CD4-positive, alpha-beta T cell (primary cell): ENCODE measurements at regions of chr15 and their contacts with region 1.

Region 1: GRCh38 chr15:100602064-100602822 is at the starts of genes ASB7 and LINS1:
- DNase-seq: peak; percentile 99 to 100 (median 100)
- ATAC-seq: peak; percentile 89
- H3K4me3 ChIP-seq: peak within 1 kb of the TSS; percentile 96
- H3K4me3 Mint-ChIP-seq: peak within 1 kb of the TSS; percentile 96
- H3K27ac ChIP-seq: peak within 1 kb of the TSS; percentile 84 to 94
- H3K27ac Mint-ChIP-seq: peak within 1 kb of the TSS; percentile 87
- H3K4me1 ChIP-seq: peaks cover 44% of the 10 kb centered on the region
- H3K4me1 Mint-ChIP-seq: peaks cover 62% of the 10 kb centered on the region
- H3K27me3 ChIP-seq: no peaks in the 10 kb centered on the region
- H3K27me3 Mint-ChIP-seq: no peaks in the 10 kb centered on the region
- CTCF ChIP-seq: no peak
- total RNA-seq, gene ASB7: 14.9 to 16.7 TPM
- total RNA-seq, gene LINS1: 38.9 to 39.6 TPM

Region 2: DNA sequence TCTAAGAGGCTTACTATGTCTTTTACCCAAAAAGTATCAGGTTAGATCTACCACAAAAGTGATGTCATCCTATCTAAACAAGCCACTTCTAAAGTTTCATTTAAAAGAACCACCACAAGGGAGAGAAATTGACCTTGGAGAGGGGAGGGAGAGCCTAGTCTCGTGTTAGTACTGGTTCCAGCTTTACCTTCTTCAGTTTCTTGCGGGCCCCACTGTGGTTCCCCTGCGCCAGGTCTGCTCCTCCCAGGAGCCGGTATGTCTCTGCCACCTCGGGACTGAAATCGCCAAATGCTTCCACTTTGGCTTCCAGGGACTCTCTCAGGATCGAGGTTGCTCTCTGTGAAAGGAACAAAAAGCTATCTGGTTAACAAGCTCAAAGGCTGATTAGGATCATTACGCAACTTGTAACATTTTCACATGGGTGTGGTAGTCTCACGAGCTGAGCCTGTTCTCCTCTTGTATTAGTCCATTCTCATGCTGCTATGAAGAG is 1446.2 kb before region 1 on chr15:
- CTCF ChIA-PET with region 1: no interaction called
- POLR2A ChIA-PET with region 1: no interaction called
- intact Hi-C with region 1: no loop called
- DNase-seq: no peak
- ATAC-seq: no peak
- H3K4me3 ChIP-seq: no peak overlapping the region
- H3K4me3 Mint-ChIP-seq: no peak overlapping the region
- H3K27ac ChIP-seq: no peak overlapping the region
- H3K27ac Mint-ChIP-seq: no peak overlapping the region
- H3K4me1 ChIP-seq: no peaks in the 10 kb centered on the region
- H3K4me1 Mint-ChIP-seq: no peaks in the 10 kb centered on the region
- H3K27me3 ChIP-seq: no peaks in the 10 kb centered on the region
- H3K27me3 Mint-ChIP-seq: no peaks in the 10 kb centered on the region
- CTCF ChIP-seq: no peak

Region 3: GRCh38 chr15:99733268-99734039 is 868.8 kb before region 1 on chr15 and contains the start of gene LYSMD4:
- CTCF ChIA-PET with region 1: no interaction called
- POLR2A ChIA-PET with region 1: interaction called, 3 read pairs
- intact Hi-C with region 1: loop called in 1 of 2 experiments (anchors 2 kb)
- DNase-seq: peak; percentile 97 to 99 (median 98)
- ATAC-seq: peak; percentile 98
- H3K4me3 ChIP-seq: peak within 1 kb of the TSS; percentile 80
- H3K4me3 Mint-ChIP-seq: peak within 1 kb of the TSS; percentile 94
- H3K27ac ChIP-seq: peak within 1 kb of the TSS; percentile 81 to 85
- H3K27ac Mint-ChIP-seq: peak within 1 kb of the TSS; percentile 94
- H3K4me1 ChIP-seq: peaks cover 16% of the 10 kb centered on the region
- H3K4me1 Mint-ChIP-seq: peaks cover 28% of the 10 kb centered on the region
- H3K27me3 ChIP-seq: no peaks in the 10 kb centered on the region
- H3K27me3 Mint-ChIP-seq: no peaks in the 10 kb centered on the region
- CTCF ChIP-seq: no peak
- total RNA-seq, gene LYSMD4: 12.9 to 13.0 TPM

Region 4: GRCh38 chr15:100572362-100572983 is 29.8 kb before region 1 on chr15:
- CTCF ChIA-PET with region 1: interaction called, 10 read pairs
- POLR2A ChIA-PET with region 1: interaction called, 44 read pairs
- intact Hi-C with region 1: loop called (anchors 2 kb)
- DNase-seq: peak in 3 of 14 experiments; percentile 41 to 58 (median 53)
- ATAC-seq: peak; percentile 68
- H3K4me3 ChIP-seq: peak overlapping the region; percentile 12
- H3K4me3 Mint-ChIP-seq: peak overlapping the region; percentile 22
- H3K27ac ChIP-seq: peak overlapping the region in 1 of 2 donors; percentile 18
- H3K27ac Mint-ChIP-seq: peak overlapping the region; percentile 74
- H3K4me1 ChIP-seq: peaks cover 19% of the 10 kb centered on the region
- H3K4me1 Mint-ChIP-seq: peaks cover 62% of the 10 kb centered on the region
- H3K27me3 ChIP-seq: no peaks in the 10 kb centered on the region
- H3K27me3 Mint-ChIP-seq: no peaks in the 10 kb centered on the region
- CTCF ChIP-seq: peak; percentile 77

Region 5: DNA sequence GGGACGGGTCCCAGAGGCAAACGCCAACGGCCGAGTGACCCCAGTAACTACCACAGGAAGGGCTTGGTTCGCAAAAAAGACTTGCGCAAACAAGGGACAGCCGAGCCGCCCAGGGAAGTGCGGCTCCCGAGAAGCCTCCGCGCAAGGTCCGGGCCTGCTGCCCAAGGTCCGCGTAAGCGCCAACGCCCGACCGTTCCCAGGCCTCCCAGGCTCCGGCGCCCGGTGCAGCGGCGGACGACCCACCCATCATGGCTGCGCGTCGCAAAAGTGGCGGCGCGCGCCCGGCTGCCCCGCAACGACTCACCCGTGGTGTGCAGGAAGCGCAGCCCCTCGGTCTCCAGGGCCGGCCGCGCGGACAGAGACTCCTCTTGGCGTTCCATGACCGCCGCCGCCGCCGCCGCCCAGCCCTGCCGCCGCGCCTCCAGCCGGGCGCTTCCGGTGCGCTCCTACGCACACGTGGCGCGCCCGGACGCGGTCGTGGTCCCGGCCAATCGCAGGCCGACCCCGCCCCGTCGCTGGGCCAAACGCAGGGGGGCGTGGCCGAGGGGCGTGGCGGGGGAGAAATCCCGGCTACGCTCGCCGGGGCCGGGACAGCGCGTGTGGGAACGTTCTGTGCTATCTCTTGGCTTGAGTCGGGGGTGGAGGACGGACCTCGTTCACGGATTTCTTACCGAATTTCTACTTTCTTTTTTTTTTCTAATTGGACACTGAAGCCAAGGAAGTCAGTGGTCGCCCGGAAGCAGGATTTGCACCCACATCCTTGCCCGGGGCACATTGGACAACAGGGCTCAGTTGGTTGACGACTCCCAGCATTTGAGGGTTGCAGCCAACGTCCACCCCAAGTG is 675.0 kb after region 1 on chr15 and contains the start of gene SELENOS:
- CTCF ChIA-PET with region 1: no interaction called
- POLR2A ChIA-PET with region 1: no interaction called
- intact Hi-C with region 1: loop called in 1 of 2 experiments (anchors 5 kb)
- DNase-seq: peak; percentile 68 to 95 (median 84)
- ATAC-seq: peak; percentile 96
- H3K4me3 ChIP-seq: peak within 1 kb of the TSS; percentile 92
- H3K4me3 Mint-ChIP-seq: peak within 1 kb of the TSS; percentile 97
- H3K27ac ChIP-seq: peak within 1 kb of the TSS; percentile 56 to 58
- H3K27ac Mint-ChIP-seq: peak within 1 kb of the TSS; percentile 95
- H3K4me1 ChIP-seq: peaks cover 23% of the 10 kb centered on the region
- H3K4me1 Mint-ChIP-seq: peaks cover 24% of the 10 kb centered on the region
- H3K27me3 ChIP-seq: no peaks in the 10 kb centered on the region
- H3K27me3 Mint-ChIP-seq: no peaks in the 10 kb centered on the region
- CTCF ChIP-seq: no peak
- total RNA-seq, gene SELENOS: 41.7 to 48.5 TPM

Region 6: DNA sequence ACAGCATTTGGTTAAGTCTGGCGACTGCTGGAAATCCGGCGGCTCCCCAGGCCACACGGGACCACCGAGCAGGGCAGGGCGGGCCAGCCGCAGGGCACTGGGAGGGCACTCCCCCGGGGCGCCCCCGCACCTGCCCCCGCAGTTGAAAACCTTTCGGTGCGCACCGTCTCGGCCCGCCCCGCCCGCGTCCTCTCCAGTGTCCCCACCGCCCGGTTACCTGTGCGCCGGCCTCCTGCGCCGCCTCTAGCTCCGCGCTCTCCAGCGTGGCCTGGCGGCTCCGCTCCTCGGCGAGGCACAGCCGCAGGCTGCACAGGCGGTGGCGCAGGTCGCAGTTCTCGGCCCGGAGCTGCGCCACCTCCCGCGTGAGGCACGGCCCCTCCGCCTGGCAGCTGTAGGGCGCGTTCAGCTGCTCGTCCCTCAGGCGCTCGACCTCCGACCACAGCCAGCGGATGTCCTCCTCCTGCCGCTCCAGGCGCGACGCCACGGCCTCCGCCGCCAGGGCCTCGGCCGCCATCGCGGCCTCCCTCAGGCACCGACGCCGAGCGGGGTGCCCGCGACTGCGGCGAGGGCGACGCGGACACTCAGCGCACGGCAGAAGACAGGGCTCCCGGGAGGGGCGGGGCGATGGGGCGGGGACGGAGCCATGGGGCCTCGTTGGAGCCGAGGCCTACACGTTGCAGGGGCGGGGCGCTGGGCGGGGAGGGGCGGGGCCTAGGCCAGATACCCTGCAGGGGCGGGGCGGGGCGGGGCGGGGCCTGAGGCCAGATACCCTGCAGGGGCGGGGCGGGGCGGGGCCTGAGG is 1121.8 kb after region 1 on chr15 and contains the start of gene TARS3:
- CTCF ChIA-PET with region 1: no interaction called
- POLR2A ChIA-PET with region 1: interaction called, 4 read pairs
- intact Hi-C with region 1: loop called in 1 of 2 experiments (anchors 10 kb)
- DNase-seq: peak; percentile 93 to 100 (median 97)
- ATAC-seq: peak; percentile 92
- H3K4me3 ChIP-seq: peak within 1 kb of the TSS; percentile 64
- H3K4me3 Mint-ChIP-seq: peak within 1 kb of the TSS; percentile 89
- H3K27ac ChIP-seq: peak within 1 kb of the TSS; percentile 61 to 81
- H3K27ac Mint-ChIP-seq: peak within 1 kb of the TSS; percentile 87
- H3K4me1 ChIP-seq: peaks cover 20% of the 10 kb centered on the region
- H3K4me1 Mint-ChIP-seq: peaks cover 42% of the 10 kb centered on the region
- H3K27me3 ChIP-seq: no peaks in the 10 kb centered on the region
- H3K27me3 Mint-ChIP-seq: no peaks in the 10 kb centered on the region
- CTCF ChIP-seq: peak; percentile 38
- total RNA-seq, gene TARS3: 16.6 to 18.1 TPM